Right ventricle myocardium superior (tissue), 1 donor: ENCODE measurements at regions of chr19 and their contacts with region 1.

Region 1: DNA sequence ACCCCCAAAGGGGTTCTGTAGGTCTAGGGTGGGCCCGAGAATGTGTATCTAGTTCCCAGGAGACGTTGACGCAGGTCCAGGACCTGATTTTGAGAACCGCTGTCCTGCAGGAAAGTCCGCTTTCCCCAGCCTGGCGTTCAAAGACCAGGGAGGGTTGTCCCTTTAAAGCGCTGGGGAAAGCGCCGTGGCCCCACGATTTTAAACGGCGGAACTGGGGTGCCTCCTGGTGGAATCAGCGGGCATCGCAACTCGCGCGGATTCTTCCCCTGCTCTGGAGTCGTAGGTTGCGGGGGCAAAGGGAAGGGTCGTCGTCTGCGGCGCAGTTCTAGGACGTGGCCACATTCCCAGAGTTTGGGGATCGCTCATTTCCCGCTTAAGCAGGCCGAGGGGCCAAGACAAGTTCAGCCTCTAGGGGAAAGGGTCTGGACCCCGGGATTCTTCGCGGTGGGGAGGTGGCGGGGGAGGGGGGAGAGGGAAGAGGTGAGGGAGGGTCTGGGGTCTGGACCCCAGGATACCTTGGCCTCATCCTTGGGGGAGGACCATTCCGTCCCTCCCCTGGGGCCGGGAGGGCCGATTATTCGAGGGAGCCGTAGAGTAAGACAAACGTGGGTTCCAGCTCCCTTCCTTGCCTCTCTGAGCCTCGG is 7.7 kb downstream of the PNMA8B start:
- DNase-seq: peak; percentile 88
- ATAC-seq: peak; percentile 86

Region 2: GRCh38 chr19:46404055-46404752 is 83.7 kb before region 1 on chr19:
- intact Hi-C with region 1: loop called (anchors 1 kb)
- DNase-seq: peak; percentile 75
- ATAC-seq: peak; percentile 66